ENCODE measurements at regions of chr21 and their contacts with region 1.

Region 1: DNA sequence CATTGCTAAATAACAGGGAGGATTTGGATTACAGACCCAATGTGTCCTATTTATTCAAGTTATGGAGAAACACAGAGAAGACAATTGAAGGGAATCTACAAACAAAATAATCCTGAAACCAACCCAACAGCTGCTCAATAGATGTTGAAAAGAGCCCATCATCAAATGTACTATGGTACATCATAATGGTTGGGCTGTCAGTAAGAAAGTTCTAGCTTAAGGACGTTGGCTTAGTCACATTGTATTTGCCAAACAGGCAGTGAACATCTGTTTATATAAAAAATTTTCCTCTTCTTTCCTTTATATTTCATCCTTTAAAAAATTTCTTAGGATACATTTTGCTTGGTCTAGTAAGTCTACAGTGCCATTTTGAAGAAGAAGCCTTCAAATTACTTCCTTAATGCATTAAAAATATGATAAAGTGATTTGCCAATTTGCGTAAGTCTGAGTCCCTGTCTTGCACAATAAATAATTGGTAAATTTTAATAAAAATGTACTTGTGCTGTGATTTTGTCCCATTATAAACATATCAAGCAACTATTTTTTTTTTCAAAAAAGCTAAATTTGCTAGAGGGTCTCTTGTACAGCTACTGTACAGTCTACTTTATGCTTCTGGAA is 14.4 kb downstream of the MAP3K7CL start:
- DNase-seq: no peak
- H3K4me3 ChIP-seq: no peak overlapping the region
- H3K27ac ChIP-seq: peak overlapping the region; percentile 48 to 76
- H3K4me1 ChIP-seq: peaks cover 11% of the 10 kb centered on the region
- H3K27me3 ChIP-seq: no peaks in the 10 kb centered on the region
- CTCF ChIP-seq: no peak
- POLR2A ChIP-seq: no peak

Region 2: DNA sequence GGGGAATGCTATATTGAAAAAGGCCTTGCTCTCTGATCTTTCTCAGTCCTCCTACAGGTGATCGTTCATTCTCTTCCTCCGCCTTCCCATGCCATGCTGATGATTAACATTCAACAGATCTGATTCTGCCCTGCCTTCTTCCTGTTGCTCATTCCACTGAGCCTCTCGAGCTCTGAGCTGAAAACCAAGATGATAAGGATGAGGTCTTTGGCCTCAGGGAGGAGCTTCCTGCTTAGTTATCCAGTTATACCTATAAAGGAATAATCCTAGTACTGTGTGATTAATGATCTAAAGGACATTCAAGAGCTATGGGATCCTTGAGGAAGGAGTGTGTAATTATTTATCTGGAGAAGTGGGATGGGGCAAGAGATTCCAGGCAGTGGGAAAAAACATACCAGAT is 39.6 kb before region 1 on chr21:
- intact Hi-C with region 1: loop called (anchors 5 kb)
- DNase-seq: no peak
- H3K4me3 ChIP-seq: no peak overlapping the region
- H3K27ac ChIP-seq: no peak overlapping the region
- H3K4me1 ChIP-seq: no peaks in the 10 kb centered on the region
- H3K27me3 ChIP-seq: no peaks in the 10 kb centered on the region
- CTCF ChIP-seq: no peak
- POLR2A ChIP-seq: no peak

Region 3: DNA sequence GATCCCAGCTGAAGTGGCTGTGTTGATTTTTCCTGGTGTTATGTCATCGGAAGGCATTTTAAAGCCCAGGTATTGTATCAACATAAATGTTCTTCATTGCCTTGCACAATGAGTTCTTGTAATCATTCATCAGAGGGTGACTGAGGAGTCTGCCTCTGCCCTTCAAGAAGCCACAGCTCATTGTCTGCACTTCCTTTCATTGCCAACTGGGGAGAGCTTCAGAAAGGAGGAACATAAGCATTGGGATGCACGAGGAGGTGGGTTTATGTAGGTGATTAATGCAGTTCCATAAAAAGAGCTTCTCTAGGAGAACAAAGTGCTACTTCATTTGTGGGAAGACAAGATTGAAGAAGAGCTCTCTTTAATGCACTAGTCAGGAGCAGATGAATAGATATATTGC is 278.3 kb after region 1 on chr21:
- intact Hi-C with region 1: no loop called
- DNase-seq: no peak
- H3K4me3 ChIP-seq: no peak overlapping the region
- H3K27ac ChIP-seq: no peak overlapping the region
- H3K4me1 ChIP-seq: no peaks in the 10 kb centered on the region
- H3K27me3 ChIP-seq: no peaks in the 10 kb centered on the region
- CTCF ChIP-seq: no peak
- POLR2A ChIP-seq: no peak

Measured in prostate gland (tissue), 2 donors.